ENCODE measurements at regions of chr21 and their contacts with region 1.

Region 1: GRCh38 chr21:40270047-40270446 is 402.8 kb downstream of the PCP4 start:
- DNase-seq: no peak
- H3K4me3 ChIP-seq: no peak overlapping the region
- H3K27ac ChIP-seq: no peak overlapping the region
- H3K4me1 ChIP-seq: no peaks in the 10 kb centered on the region
- H3K27me3 ChIP-seq: no peaks in the 10 kb centered on the region
- CTCF ChIP-seq: no peak

Region 2: GRCh38 chr21:40200946-40201345 is 69.1 kb before region 1 on chr21:
- CTCF ChIA-PET with region 1: no interaction called
- dilution Hi-C with region 1: no loop called
- in situ Hi-C with region 1: no loop called
- intact Hi-C with region 1: no loop called
- DNase-seq: no peak
- H3K4me3 ChIP-seq: no peak overlapping the region
- H3K27ac ChIP-seq: no peak overlapping the region
- H3K4me1 ChIP-seq: no peaks in the 10 kb centered on the region
- H3K27me3 ChIP-seq: no peaks in the 10 kb centered on the region
- CTCF ChIP-seq: no peak

Region 3: DNA sequence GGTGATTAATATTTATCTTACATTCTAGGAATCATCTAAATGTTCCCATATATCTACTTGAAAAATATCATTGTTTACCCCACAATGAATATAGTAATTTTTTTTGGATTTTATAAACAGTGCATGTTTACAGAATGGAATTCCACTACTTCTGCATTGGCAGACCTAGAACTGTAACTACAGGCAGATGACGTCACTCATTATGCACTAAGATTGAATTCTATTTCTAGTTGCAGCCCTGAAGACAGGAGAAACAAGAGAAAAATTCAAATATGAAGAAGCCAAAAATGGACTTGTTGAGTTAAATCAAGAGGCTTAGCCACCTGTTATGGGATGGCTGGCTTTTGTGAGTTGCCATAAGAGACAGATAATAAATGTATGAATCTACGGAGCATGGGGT is 38.1 kb before region 1 on chr21:
- CTCF ChIA-PET with region 1: no interaction called
- dilution Hi-C with region 1: loop called (anchors 5 kb)
- in situ Hi-C with region 1: no loop called
- intact Hi-C with region 1: no loop called
- DNase-seq: no peak
- H3K4me3 ChIP-seq: no peak overlapping the region
- H3K27ac ChIP-seq: no peak overlapping the region
- H3K4me1 ChIP-seq: no peaks in the 10 kb centered on the region
- H3K27me3 ChIP-seq: no peaks in the 10 kb centered on the region
- CTCF ChIP-seq: no peak

Region 4: GRCh38 chr21:40315635-40316034 is 45.6 kb after region 1 on chr21:
- CTCF ChIA-PET with region 1: no interaction called
- dilution Hi-C with region 1: no loop called
- in situ Hi-C with region 1: no loop called
- intact Hi-C with region 1: no loop called
- DNase-seq: no peak
- H3K4me3 ChIP-seq: no peak overlapping the region
- H3K27ac ChIP-seq: no peak overlapping the region
- H3K4me1 ChIP-seq: no peaks in the 10 kb centered on the region
- H3K27me3 ChIP-seq: no peaks in the 10 kb centered on the region
- CTCF ChIP-seq: no peak